GM18951 (cell line): ENCODE measurements at regions of chr7 and their contacts with region 1.

Region 1: DNA sequence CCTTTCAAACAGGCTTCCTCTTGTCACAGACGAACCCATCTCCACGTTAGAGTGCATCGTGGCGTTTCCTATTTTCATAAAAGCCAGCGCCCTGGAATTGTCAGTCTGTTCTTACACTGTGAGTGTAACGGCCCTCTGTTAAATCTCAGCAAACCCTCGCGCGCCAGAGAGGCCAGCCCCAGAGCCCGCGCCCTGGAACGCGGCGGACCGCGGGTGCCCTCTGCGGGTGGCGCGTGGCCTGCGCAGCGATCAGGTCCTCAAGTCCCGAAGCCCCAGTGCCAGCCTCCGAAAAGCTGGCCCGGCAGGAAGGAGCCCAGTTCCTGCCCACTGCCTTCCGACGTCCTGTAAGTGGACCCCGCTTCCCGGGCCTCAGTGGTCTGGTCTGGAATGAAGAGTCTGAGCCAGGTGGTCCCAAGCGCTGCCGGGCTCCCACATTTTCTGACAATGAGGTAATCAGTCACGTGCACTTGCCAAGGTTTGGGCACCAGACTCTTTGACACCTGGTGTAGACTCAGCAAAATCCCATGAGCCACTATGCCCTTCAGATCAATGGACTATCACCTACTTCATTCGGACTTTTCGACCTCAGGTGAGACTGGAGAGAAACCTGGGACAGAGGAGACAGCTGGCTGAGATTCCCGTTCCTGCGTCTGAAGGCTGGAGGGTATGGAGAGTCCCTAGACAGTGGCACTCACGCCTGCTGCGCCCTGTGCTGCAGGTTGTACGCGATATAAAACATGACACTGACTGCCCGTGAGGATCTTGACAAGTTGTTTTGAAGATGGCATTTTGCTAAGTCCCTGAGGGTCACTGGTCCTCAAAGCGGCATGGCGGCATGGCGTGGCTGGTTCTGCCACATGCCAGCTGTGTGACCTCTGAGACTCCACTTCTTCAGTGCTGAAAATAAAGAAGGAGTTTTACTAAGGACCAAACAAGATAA is 109.4 kb upstream of the LANCL2 start:
- POLR2A ChIP-seq: no peak

Region 2: GRCh38 chr7:54773472-54774399 is 482.0 kb before region 1 on chr7:
- in situ Hi-C with region 1: loop called (anchors 10 kb)
- POLR2A ChIP-seq: no peak

Region 3: DNA sequence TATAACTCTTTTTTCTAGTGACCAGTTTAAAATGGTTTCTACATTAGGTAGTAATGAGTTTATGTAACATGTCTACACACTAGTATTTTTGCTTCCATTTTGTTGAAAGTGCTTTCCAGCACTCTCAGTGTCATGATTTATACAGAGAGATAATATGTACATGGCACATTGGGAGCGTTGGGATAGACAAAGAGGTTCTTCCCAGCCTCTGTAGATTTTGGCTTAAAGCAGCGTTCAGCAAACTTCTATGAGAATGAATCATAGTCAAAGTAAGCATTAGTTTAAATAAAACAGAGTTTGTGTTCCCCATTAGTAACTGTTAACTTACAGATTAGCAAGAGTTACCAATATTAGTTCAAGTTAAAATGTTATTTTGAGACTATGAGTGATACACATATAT is 562.9 kb after region 1 on chr7:
- in situ Hi-C with region 1: no loop called
- POLR2A ChIP-seq: no peak